Lower leg skin (tissue), 4 donors: ENCODE measurements at regions of chr1 and their contacts with region 1.

Region 1: GRCh38 chr1:46262508-46262907 is 14.9 kb downstream of the RAD54L start:
- DNase-seq: no peak
- H3K4me3 ChIP-seq: no peak overlapping the region
- CTCF ChIP-seq: no peak
- POLR2A ChIP-seq: no peak

Region 2: GRCh38 chr1:46333300-46334029 is 71.0 kb after region 1 on chr1:
- intact Hi-C with region 1: loop called (anchors 10 kb)
- DNase-seq: no peak
- H3K4me3 ChIP-seq: no peak overlapping the region
- CTCF ChIP-seq: no peak
- POLR2A ChIP-seq: no peak